IMR-90 (cell line): ENCODE measurements at regions of chrX and their contacts with region 1.

Region 1: DNA sequence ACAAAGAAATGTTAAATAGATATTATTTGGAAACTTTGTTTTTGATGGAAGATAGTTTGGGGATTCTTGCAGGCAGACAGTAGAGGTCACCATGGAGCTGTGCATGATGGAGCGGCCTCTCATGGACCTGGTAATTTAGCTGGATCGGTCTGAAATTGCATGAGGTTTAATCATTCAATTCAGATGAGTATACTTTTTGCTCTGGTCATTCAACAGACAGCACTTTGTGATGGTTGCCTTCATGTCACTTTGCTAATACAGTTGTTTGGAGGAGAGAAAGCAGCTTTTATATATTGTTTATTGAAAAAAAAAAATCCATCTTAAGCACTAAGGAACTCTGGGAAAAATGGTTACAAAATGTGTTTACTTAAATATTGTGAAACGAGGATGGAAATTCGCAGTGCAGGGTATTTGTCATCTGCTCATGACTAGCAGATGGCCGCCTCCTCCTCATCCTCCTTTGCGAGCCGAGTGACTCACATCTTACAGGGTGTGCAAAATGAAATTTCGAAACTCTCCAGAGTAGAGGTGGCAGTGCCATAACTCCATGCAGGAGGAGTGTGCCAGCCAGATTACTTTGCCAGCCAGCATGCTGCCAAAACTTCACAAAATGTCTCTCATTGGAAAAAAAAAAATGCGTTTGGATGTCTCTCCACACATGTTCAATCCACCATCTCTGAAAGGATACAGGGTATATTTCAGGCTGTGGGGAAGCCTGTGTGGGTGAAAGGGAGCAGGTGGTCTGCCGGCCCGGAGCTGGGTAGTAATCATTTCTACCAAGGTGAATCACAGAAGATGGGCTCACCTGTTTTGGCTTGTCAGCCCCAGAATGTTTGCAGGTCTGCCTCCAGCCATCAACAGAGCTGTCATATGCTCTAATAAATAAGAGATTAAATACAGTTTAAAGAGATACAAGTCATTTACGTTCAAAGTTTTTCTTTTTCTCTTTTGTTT is 314.9 kb upstream of the DIPK2B start:
- DNase-seq: peak; percentile 92
- ATAC-seq: peak; percentile 71
- H3K4me3 ChIP-seq: peak overlapping the region; percentile 23; the same call in 1 of the 2 replicates
- H3K27ac ChIP-seq: peak overlapping the region; percentile 77
- H3K4me1 ChIP-seq: peaks cover 7% of the 10 kb centered on the region
- H3K27me3 ChIP-seq: peaks cover 2% of the 10 kb centered on the region
- CTCF ChIP-seq: peak; percentile 74
- POLR2A ChIP-seq: peak; percentile 49; the same call in 1 of the 2 replicates
- RAD21 ChIP-seq: peak; percentile 83

Region 2: GRCh38 chrX:45322382-45322781 is 193.2 kb before region 1 on chrX:
- CTCF ChIA-PET with region 1: interaction called, 11 read pairs
- POLR2A ChIA-PET with region 1: no interaction called
- dilution Hi-C with region 1: no loop called
- in situ Hi-C with region 1: loop called (anchors 10 kb)
- intact Hi-C with region 1: loop called (anchors 1 kb)
- DNase-seq: peak; percentile 83
- ATAC-seq: peak; percentile 87
- H3K4me3 ChIP-seq: no peak overlapping the region
- H3K27ac ChIP-seq: peak overlapping the region; percentile 66
- H3K4me1 ChIP-seq: no peaks in the 10 kb centered on the region
- H3K27me3 ChIP-seq: peaks cover 4% of the 10 kb centered on the region
- CTCF ChIP-seq: peak; percentile 69
- POLR2A ChIP-seq: no peak
- RAD21 ChIP-seq: peak; percentile 81

Region 3: GRCh38 chrX:45621376-45622041 is 106.0 kb after region 1 on chrX:
- CTCF ChIA-PET with region 1: interaction called, 3 read pairs
- POLR2A ChIA-PET with region 1: no interaction called
- dilution Hi-C with region 1: no loop called
- in situ Hi-C with region 1: no loop called
- intact Hi-C with region 1: loop called (anchors 1 kb)
- DNase-seq: peak; percentile 80
- ATAC-seq: peak; percentile 16; the same call in 1 of the 2 replicates
- H3K4me3 ChIP-seq: no peak overlapping the region
- H3K27ac ChIP-seq: peak overlapping the region; percentile 78
- H3K4me1 ChIP-seq: peaks cover 2% of the 10 kb centered on the region; the same call in 1 of the 2 replicates
- H3K27me3 ChIP-seq: no peaks in the 10 kb centered on the region
- CTCF ChIP-seq: no peak
- POLR2A ChIP-seq: no peak
- RAD21 ChIP-seq: no peak

Region 4: DNA sequence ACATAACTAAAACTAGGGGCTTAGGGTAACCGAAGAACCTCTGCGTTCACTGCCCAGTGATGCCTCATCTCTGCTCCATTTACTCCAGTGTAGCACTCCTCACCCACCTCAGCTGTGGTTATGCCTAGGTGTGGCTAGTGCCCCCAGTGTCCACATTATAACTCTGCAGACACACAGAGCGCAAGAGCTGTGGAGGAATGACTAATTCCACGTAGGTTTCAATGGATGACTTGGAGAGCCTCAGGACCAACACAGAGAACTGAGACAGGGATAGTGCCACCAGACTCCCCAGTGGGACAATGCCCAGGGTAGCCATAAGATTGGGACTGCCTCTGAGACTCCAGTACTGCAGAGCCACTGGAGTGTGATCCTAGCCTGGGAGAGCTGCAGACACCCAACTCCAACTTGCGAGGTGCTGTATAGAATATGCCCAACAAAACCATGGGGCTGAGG is 227.6 kb after region 1 on chrX:
- CTCF ChIA-PET with region 1: interaction called, 4 read pairs
- POLR2A ChIA-PET with region 1: no interaction called
- dilution Hi-C with region 1: no loop called
- in situ Hi-C with region 1: loop called (anchors 10 kb)
- intact Hi-C with region 1: no loop called
- DNase-seq: peak; percentile 75
- ATAC-seq: peak; percentile 62
- H3K4me3 ChIP-seq: no peak overlapping the region
- H3K27ac ChIP-seq: no peak overlapping the region
- H3K4me1 ChIP-seq: no peaks in the 10 kb centered on the region
- H3K27me3 ChIP-seq: no peaks in the 10 kb centered on the region
- CTCF ChIP-seq: peak; percentile 40
- POLR2A ChIP-seq: no peak; the same call in 1 of the 2 replicates
- RAD21 ChIP-seq: peak; percentile 48

Region 5: DNA sequence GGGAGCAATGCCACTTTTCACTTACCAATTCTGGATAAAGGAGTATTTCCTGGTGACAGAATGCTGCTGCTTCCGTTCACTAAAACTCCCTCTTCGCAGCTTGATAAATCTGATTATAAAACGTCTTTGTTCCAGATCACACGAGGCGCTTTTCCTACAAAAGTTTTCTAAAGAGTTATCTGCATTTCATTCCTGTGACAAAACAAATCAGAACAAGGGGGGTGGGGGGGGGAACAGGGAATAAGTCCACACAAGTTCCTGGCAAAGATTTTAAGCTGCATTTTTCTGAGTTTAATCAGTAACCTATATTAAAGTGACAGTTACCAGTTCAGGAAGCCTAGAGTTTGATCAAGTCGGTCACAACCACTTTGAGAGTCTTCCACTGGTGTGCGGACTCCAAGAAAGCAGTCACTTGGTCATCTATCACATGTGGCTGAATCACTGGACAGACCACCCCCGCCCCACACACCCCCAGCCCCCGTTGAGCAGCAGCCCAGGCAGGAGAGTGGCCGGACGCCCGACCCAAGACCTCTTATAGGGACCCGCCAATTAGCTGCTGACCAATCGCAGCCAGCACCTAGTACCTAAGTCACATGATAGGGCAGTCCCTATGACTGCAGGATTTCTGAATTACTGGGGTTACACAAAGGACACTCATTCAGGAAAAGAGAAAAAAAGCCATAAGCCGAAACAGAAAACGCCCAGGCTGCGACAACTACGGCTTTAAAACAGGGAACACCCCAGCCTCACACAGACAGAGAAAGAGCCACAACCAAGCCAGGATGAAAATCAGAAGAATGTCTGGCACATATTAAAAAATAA is 254.4 kb after region 1 on chrX:
- CTCF ChIA-PET with region 1: no interaction called
- POLR2A ChIA-PET with region 1: interaction called, 3 read pairs
- dilution Hi-C with region 1: no loop called
- in situ Hi-C with region 1: no loop called
- intact Hi-C with region 1: loop called (anchors 5 kb)
- DNase-seq: peak; percentile 91
- ATAC-seq: peak; percentile 57
- H3K4me3 ChIP-seq: peak overlapping the region; percentile 68
- H3K27ac ChIP-seq: peak overlapping the region; percentile 81
- H3K4me1 ChIP-seq: peaks cover 5% of the 10 kb centered on the region; the same call in 1 of the 2 replicates
- H3K27me3 ChIP-seq: no peaks in the 10 kb centered on the region
- CTCF ChIP-seq: no peak
- POLR2A ChIP-seq: peak; percentile 83
- RAD21 ChIP-seq: no peak

Region 6: GRCh38 chrX:46376246-46376885 is 860.8 kb after region 1 on chrX:
- CTCF ChIA-PET with region 1: no interaction called
- POLR2A ChIA-PET with region 1: no interaction called
- dilution Hi-C with region 1: no loop called
- in situ Hi-C with region 1: no loop called
- intact Hi-C with region 1: loop called (anchors 10 kb)
- DNase-seq: peak; percentile 48
- ATAC-seq: peak; percentile 83
- H3K4me3 ChIP-seq: no peak overlapping the region
- H3K27ac ChIP-seq: no peak overlapping the region
- H3K4me1 ChIP-seq: 0 out of 2 replicates have a peak, but pooled peaks cover 2% of the 10 kb centered on the region
- H3K27me3 ChIP-seq: no peaks in the 10 kb centered on the region
- CTCF ChIP-seq: peak; percentile 45
- POLR2A ChIP-seq: no peak
- RAD21 ChIP-seq: peak; percentile 55

Region 7: DNA sequence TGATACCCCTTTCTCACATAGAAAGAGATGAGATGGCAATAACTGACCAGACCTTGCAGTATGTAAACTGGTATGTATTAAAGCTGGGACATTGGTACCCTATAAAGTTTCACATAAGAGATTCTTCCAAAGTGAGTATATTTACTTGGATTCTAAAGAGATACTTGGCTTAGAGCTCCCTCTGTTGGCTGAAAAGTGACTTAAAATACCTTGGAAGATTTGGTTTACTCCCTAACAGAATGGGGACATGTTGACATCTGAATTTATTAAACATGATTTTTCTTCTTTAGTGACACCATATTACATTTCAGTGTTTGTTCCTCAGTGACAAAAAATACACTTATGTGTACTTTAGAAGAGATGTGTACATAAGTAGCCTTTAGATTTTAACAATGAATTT is 1514.8 kb after region 1 on chrX:
- CTCF ChIA-PET with region 1: no interaction called
- POLR2A ChIA-PET with region 1: no interaction called
- dilution Hi-C with region 1: no loop called
- in situ Hi-C with region 1: no loop called
- intact Hi-C with region 1: no loop called
- DNase-seq: peak; percentile 68
- ATAC-seq: no peak
- H3K4me3 ChIP-seq: no peak overlapping the region
- H3K27ac ChIP-seq: no peak overlapping the region
- H3K4me1 ChIP-seq: no peaks in the 10 kb centered on the region
- H3K27me3 ChIP-seq: peaks cover 8% of the 10 kb centered on the region
- CTCF ChIP-seq: peak; percentile 74
- POLR2A ChIP-seq: no peak
- RAD21 ChIP-seq: peak; percentile 73